Activated B cell treated with CpG ODN at 0.5 μM for 24 hours (primary cell): ENCODE measurements at regions of chr3 and their contacts with region 1.

Region 1: GRCh38 chr3:110314512-110315114 is 757.0 kb upstream of the NECTIN3 start:
- DNase-seq: no peak
- ATAC-seq: peak; percentile 71
- H3K4me3 Mint-ChIP-seq: no peak overlapping the region
- H3K27ac Mint-ChIP-seq: no peak overlapping the region
- H3K4me1 Mint-ChIP-seq: no peaks in the 10 kb centered on the region
- H3K27me3 Mint-ChIP-seq: no peaks in the 10 kb centered on the region
- CTCF ChIP-seq: peak; percentile 78

Region 2: GRCh38 chr3:108662130-108662738 is 1652.4 kb before region 1 on chr3:
- CTCF ChIA-PET with region 1: interaction called, 7 read pairs
- POLR2A ChIA-PET with region 1: no interaction called
- intact Hi-C with region 1: loop called (anchors 1 kb)
- DNase-seq: no peak
- ATAC-seq: peak; percentile 66
- H3K4me3 Mint-ChIP-seq: no peak overlapping the region
- H3K27ac Mint-ChIP-seq: no peak overlapping the region
- H3K4me1 Mint-ChIP-seq: peaks cover 4% of the 10 kb centered on the region
- H3K27me3 Mint-ChIP-seq: no peaks in the 10 kb centered on the region
- CTCF ChIP-seq: no peak

Region 3: DNA sequence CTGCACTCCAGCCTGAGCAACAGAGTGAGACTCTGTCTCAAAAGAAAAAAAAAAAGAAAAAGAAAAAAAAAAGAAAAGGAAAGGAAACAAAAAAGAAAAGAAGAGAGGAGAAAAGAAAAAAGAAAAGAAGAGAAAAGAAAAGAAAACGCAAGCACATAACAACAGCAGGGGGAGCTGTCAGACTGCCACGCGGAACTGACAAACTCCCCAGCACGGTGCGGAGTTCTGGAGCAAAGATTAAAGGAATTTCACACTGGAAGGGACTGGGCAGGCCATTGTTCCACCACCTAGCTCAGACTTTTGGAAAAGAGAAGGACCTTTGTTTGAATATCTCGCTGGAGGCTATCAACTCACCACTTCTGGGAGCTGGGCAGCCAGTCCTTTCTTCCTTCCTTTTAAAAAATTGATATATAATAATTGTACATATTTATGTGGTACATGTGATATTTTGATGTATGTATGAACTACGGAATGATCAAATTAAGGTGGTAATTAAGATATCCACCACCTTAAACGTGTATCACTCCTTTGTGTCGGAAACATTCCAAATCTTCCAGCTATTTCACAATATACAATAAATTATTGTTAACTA is 1038.8 kb before region 1 on chr3:
- CTCF ChIA-PET with region 1: no interaction called
- POLR2A ChIA-PET with region 1: no interaction called
- intact Hi-C with region 1: loop called (anchors 5 kb)
- DNase-seq: no peak
- ATAC-seq: no peak
- H3K4me3 Mint-ChIP-seq: no peak overlapping the region
- H3K27ac Mint-ChIP-seq: no peak overlapping the region
- H3K4me1 Mint-ChIP-seq: no peaks in the 10 kb centered on the region
- H3K27me3 Mint-ChIP-seq: no peaks in the 10 kb centered on the region
- CTCF ChIP-seq: no peak

Region 4: DNA sequence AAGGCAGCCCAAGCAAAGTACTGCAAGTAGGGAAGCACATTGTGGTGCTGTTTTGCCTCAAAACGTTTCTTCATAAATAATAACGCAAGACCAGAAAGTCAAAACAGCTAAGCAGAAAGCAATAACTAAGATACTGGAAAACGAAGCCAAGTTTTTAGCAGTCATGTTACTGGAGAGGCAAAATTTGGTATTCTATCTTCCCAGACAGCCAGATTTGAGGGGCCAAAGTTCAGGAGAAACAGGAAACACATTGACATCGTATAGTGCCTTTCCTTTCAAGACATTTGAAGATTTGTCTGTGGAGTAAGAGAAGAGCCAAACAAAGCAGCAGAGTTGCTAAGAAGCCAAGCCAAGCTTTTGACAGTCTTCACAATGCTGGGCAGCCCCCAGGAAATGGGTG is 86.6 kb before region 1 on chr3:
- CTCF ChIA-PET with region 1: no interaction called
- POLR2A ChIA-PET with region 1: no interaction called
- intact Hi-C with region 1: no loop called
- DNase-seq: no peak
- ATAC-seq: no peak
- H3K4me3 Mint-ChIP-seq: no peak overlapping the region
- H3K27ac Mint-ChIP-seq: no peak overlapping the region
- H3K4me1 Mint-ChIP-seq: no peaks in the 10 kb centered on the region
- H3K27me3 Mint-ChIP-seq: no peaks in the 10 kb centered on the region
- CTCF ChIP-seq: no peak

Region 5: DNA sequence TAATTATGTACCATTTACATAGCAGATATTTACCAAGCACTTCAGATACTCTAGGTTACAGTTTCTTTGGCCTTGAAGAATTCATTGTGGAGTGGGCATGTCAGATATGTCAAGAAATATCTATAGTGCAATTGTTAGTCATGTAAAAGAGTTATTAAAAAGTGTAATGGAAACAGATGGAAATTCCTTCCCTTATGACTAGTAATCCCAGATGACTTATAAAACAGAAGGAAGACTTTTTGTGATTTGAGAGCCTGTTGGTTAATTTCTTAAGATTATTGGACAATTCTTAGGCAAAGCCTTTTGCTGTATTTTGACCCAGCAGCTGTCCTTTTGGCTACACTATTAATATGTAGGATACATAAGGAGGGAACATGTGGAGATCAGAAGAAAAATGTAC is 48.1 kb after region 1 on chr3:
- CTCF ChIA-PET with region 1: no interaction called
- POLR2A ChIA-PET with region 1: no interaction called
- intact Hi-C with region 1: loop called (anchors 1 kb)
- DNase-seq: no peak
- ATAC-seq: no peak
- H3K4me3 Mint-ChIP-seq: no peak overlapping the region
- H3K27ac Mint-ChIP-seq: no peak overlapping the region
- H3K4me1 Mint-ChIP-seq: no peaks in the 10 kb centered on the region
- H3K27me3 Mint-ChIP-seq: no peaks in the 10 kb centered on the region
- CTCF ChIP-seq: no peak

Region 6: GRCh38 chr3:110894574-110894973 is 580.0 kb after region 1 on chr3:
- CTCF ChIA-PET with region 1: no interaction called
- POLR2A ChIA-PET with region 1: no interaction called
- intact Hi-C with region 1: no loop called
- DNase-seq: no peak
- ATAC-seq: no peak
- H3K4me3 Mint-ChIP-seq: no peak overlapping the region
- H3K27ac Mint-ChIP-seq: no peak overlapping the region
- H3K4me1 Mint-ChIP-seq: no peaks in the 10 kb centered on the region
- H3K27me3 Mint-ChIP-seq: no peaks in the 10 kb centered on the region
- CTCF ChIP-seq: no peak

Region 7: DNA sequence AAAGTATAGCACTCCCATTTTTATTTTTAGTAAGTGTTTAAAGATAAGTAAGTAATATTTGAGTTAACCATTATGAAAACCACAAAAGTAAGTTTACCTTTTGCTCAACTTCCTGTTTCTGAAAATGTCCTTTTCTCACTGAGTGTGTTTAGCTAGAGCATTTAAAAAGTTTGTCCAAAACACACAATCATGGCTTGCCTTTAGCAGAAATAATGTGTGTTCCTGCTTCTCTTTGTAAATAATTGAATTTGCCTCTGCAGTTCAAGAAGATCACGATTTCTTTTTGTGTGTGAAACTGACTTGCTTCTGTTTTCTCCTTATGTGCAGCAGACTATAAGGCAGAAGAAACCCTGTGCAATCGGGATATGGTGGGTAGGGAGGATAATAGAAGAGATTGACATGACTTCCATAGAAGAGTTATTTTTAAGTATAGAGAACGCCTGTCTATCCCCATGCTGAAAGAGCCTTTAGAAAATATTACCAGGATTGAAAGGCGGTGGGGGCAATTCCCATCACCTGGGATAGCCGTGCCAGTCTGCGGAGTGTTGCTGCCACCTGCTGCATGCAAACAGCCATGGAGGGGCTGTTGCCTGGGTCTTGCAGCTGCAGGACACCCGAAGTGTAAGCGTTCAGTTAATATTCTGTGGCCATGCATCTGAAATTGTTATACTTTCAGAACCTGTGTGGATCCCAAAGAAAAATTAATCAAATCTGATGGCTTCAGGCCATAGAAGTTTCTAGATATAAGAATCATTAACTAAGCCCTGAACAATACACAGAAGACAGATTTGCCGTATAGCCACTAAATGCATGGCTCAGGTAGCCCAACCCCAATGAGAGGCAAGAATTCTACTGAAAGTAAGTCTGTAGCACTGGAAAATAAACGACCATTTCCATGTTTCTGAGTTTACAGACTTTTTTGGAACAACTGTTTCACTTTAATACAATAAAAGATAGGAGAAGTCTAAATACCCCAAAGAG is 1225.0 kb after region 1 on chr3:
- CTCF ChIA-PET with region 1: interaction called, 16 read pairs
- POLR2A ChIA-PET with region 1: no interaction called
- intact Hi-C with region 1: loop called (anchors 1 kb)
- DNase-seq: peak; percentile 32
- ATAC-seq: peak; percentile 76
- H3K4me3 Mint-ChIP-seq: peak overlapping the region; percentile 71
- H3K27ac Mint-ChIP-seq: peak overlapping the region; percentile 66
- H3K4me1 Mint-ChIP-seq: peaks cover 57% of the 10 kb centered on the region
- H3K27me3 Mint-ChIP-seq: no peaks in the 10 kb centered on the region
- CTCF ChIP-seq: no peak